ENCODE measurements at regions of chr19 and their contacts with region 1.

Region 1: DNA sequence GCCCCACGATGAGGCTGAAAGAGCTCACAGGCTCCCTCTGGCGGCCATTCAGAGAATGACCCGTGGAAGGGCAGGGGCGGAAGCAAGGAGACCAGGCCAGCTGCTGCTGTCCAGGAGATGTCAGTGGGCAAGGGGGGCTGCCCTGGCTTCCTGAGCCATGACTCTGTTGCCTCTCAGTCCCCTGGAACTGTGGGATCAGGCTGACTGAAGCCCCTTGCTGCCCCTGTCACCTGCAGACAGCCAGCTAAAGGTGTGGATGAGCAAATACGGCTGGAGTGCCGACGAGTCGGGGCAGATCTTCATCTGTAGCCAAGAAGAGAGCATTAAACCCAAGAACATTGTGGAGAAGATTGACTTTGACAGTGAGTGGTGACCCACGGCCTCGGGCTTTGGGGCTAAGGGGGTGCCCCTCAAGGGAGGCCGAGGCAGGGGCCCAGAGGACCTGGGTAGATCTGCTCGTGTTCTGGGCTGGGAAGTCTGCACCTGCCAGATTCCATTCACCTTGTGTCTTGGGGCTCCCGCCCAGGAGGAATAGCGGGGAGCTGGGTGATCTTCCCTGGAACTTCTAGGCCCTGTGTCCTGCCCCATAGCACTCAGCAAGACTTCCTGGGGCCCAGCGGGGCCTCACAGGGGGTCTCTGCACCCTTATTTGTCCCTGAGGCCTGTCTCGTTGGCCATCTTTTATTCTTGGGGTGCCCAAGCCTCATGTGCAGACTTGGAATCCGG is 12.5 kb upstream of the ACTN4 start:
- DNase-seq: peak; percentile 42 to 79 (median 58)
- ATAC-seq: peak; percentile 64
- H3K4me3 ChIP-seq: no peak overlapping the region
- H3K4me3 Mint-ChIP-seq: peak overlapping the region in 9 of 10 donors; percentile 21 to 65 (median 47)
- H3K27ac ChIP-seq: no peak overlapping the region
- H3K27ac Mint-ChIP-seq: peak overlapping the region; percentile 2 to 81 (median 69)
- H3K4me1 ChIP-seq: peaks cover 23 to 24% of the 10 kb centered on the region in 2 donors
- H3K4me1 Mint-ChIP-seq: peaks cover 14 to 40% (median 35%) of the 10 kb centered on the region in 7 donors
- H3K27me3 ChIP-seq: no peaks in the 10 kb centered on the region
- H3K27me3 Mint-ChIP-seq: no peaks in the 10 kb centered on the region

Region 2: DNA sequence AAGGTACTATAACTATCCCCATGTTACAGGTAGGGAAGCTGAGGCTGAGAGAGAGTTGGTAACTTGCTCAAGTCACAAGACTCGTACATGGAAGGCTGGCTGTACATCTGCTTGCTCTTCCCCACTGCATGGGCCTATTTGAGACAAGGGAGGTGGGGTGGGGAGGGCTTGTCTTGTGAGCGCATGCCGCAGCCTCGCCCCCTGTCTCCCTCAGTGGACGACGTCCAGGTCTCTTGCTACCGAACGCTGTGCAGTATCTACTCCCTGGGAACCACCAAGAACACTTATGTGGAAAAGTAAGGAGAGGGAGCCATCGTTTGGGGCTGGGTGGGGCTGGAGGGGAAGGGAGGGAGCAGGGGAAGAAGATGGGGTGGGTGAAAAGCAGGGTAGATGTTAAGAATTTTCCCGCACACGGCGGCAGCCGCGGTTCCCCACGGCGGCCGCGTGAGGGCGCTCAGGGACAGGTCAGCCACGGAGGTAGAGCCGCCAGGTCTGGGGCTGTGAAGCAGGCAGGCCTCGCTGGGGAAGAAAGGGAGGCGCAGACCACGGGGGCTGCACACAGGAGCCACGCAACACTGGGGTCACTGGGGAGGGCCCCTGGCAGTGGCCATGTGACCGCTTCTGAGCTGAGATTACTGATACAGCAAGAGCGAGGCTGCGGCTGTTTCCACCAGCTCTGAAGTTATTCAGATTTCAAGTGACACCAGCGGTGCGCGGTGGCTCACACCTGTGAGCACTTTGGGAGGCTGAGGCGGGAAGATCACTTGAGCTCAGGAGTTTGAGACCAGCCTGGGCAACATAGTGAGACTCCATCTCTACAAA is 119.9 kb before region 1 on chr19:
- CTCF ChIA-PET with region 1: interaction called, 25 read pairs
- POLR2A ChIA-PET with region 1: interaction called, 5 read pairs
- intact Hi-C with region 1: loop called (anchors 1 kb)
- DNase-seq: peak; percentile 47 to 84 (median 74)
- ATAC-seq: peak; percentile 95
- H3K4me3 ChIP-seq: no peak overlapping the region
- H3K4me3 Mint-ChIP-seq: peak overlapping the region in 2 of 10 donors; percentile 16 to 45
- H3K27ac ChIP-seq: no peak overlapping the region
- H3K27ac Mint-ChIP-seq: peak overlapping the region in 3 of 9 donors; percentile 14 to 64 (median 60)
- H3K4me1 ChIP-seq: peaks cover 0 to 10% of the 10 kb centered on the region in 2 donors
- H3K4me1 Mint-ChIP-seq: peaks cover 6 to 30% (median 9%) of the 10 kb centered on the region in 7 donors
- H3K27me3 ChIP-seq: no peaks in the 10 kb centered on the region
- H3K27me3 Mint-ChIP-seq: peaks cover 0 to 4% (median 4%) of the 10 kb centered on the region in 5 donors

Region 3: GRCh38 chr19:38559428-38560401 is 75.2 kb before region 1 on chr19:
- CTCF ChIA-PET with region 1: no interaction called
- POLR2A ChIA-PET with region 1: no interaction called
- intact Hi-C with region 1: loop called in 1 of 2 experiments (anchors 5 kb)
- DNase-seq: no peak
- ATAC-seq: peak; percentile 71
- H3K4me3 ChIP-seq: no peak overlapping the region
- H3K4me3 Mint-ChIP-seq: peak overlapping the region in 1 of 10 donors; percentile 71
- H3K27ac ChIP-seq: no peak overlapping the region
- H3K27ac Mint-ChIP-seq: peak overlapping the region in 1 of 9 donors; percentile 80
- H3K4me1 ChIP-seq: peaks cover 0 to 49% of the 10 kb centered on the region in 2 donors
- H3K4me1 Mint-ChIP-seq: peaks cover 2 to 44% (median 7%) of the 10 kb centered on the region in 7 donors
- H3K27me3 ChIP-seq: no peaks in the 10 kb centered on the region
- H3K27me3 Mint-ChIP-seq: peaks cover 11 to 25% (median 13%) of the 10 kb centered on the region in 5 donors

Region 4: DNA sequence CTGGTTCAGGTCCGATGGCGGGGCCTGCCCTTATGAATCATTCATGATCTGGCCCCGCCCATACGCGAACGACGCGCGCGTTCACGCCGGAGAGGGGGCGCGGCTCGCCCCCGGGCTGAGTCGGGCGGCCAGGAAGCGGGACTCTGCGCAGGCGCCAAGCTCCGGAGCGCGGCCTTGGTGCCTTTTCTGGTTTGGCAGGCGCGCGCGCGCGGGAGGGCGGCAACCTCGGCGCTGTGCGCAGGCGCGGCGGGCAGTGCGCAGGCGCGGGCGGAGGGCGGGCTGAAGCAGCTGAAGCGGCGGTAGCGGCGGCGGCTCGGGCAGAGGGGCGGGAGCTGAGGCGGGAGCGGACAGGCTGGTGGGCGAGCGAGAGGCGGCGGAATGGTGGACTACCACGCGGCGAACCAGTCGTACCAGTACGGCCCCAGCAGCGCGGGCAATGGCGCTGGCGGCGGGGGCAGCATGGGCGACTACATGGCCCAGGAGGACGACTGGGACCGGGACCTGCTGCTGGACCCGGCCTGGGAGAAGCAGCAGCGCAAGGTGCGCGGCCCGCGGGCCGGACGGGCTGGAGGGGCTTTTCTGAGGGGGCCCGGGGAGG is 12.5 kb after region 1 on chr19 and contains the start of gene ACTN4:
- CTCF ChIA-PET with region 1: interaction called, 17 read pairs
- POLR2A ChIA-PET with region 1: interaction called, 4 read pairs
- intact Hi-C with region 1: loop called (anchors 1 kb)
- DNase-seq: peak; percentile 98 to 100 (median 100)
- ATAC-seq: peak; percentile 98
- H3K4me3 ChIP-seq: peak within 1 kb of the TSS; percentile 85
- H3K4me3 Mint-ChIP-seq: peak within 1 kb of the TSS; percentile 74 to 99 (median 89)
- H3K27ac ChIP-seq: peak within 1 kb of the TSS; percentile 69
- H3K27ac Mint-ChIP-seq: peak within 1 kb of the TSS; percentile 74 to 87 (median 84)
- H3K4me1 ChIP-seq: peaks cover 20 to 27% of the 10 kb centered on the region in 2 donors
- H3K4me1 Mint-ChIP-seq: peaks cover 20 to 52% (median 33%) of the 10 kb centered on the region in 7 donors
- H3K27me3 ChIP-seq: peaks cover 0 to 17% of the 10 kb centered on the region in 2 donors
- H3K27me3 Mint-ChIP-seq: peaks cover 0 to 33% (median 19%) of the 10 kb centered on the region in 5 donors
- total RNA-seq, gene ACTN4: 49.2 to 355 (median 54.4) TPM

Region 5: GRCh38 chr19:38679839-38680238 is 44.9 kb after region 1 on chr19:
- CTCF ChIA-PET with region 1: no interaction called
- POLR2A ChIA-PET with region 1: no interaction called
- intact Hi-C with region 1: loop called in 1 of 2 experiments (anchors 2 kb)
- DNase-seq: no peak
- ATAC-seq: peak; percentile 12
- H3K4me3 ChIP-seq: no peak overlapping the region
- H3K4me3 Mint-ChIP-seq: peak overlapping the region in 2 of 10 donors; percentile 10 to 25
- H3K27ac ChIP-seq: no peak overlapping the region
- H3K27ac Mint-ChIP-seq: peak overlapping the region in 1 of 9 donors; percentile 56
- H3K4me1 ChIP-seq: peaks cover 0 to 98% of the 10 kb centered on the region in 2 donors
- H3K4me1 Mint-ChIP-seq: peaks cover 30 to 92% (median 51%) of the 10 kb centered on the region in 7 donors
- H3K27me3 ChIP-seq: no peaks in the 10 kb centered on the region
- H3K27me3 Mint-ChIP-seq: no peaks in the 10 kb centered on the region

Region 6: GRCh38 chr19:38729653-38730469 is 94.9 kb after region 1 on chr19:
- CTCF ChIA-PET with region 1: no interaction called
- POLR2A ChIA-PET with region 1: no interaction called
- intact Hi-C with region 1: loop called in 1 of 2 experiments (anchors 2 kb)
- DNase-seq: peak; percentile 58 to 83 (median 73)
- ATAC-seq: peak; percentile 78
- H3K4me3 ChIP-seq: no peak overlapping the region
- H3K4me3 Mint-ChIP-seq: no peak overlapping the region
- H3K27ac ChIP-seq: no peak overlapping the region
- H3K27ac Mint-ChIP-seq: peak overlapping the region in 3 of 9 donors; percentile 23 to 48 (median 30)
- H3K4me1 ChIP-seq: peaks cover 9 to 10% of the 10 kb centered on the region in 2 donors
- H3K4me1 Mint-ChIP-seq: peaks cover 5 to 39% (median 13%) of the 10 kb centered on the region in 7 donors
- H3K27me3 ChIP-seq: no peaks in the 10 kb centered on the region
- H3K27me3 Mint-ChIP-seq: no peaks in the 10 kb centered on the region